ENCODE measurements at regions of chr7 and their contacts with region 1.

Region 1: GRCh38 chr7:16645593-16646471 is at the starts of genes ANKMY2 and BZW2:
- DNase-seq: peak; percentile 95
- ATAC-seq: peak; percentile 94 to 97 (median 96)
- H3K4me3 ChIP-seq: peak within 1 kb of the TSS; percentile 74 to 98 (median 90)
- H3K27ac ChIP-seq: peak within 1 kb of the TSS; percentile 73 to 98 (median 92)
- H3K4me1 ChIP-seq: peaks cover 6 to 80% (median 64%) of the 10 kb centered on the region in 9 donors
- H3K27me3 ChIP-seq: no peaks in the 10 kb centered on the region
- CTCF ChIP-seq: peak in 4 of 9 donors; percentile 13 to 46 (median 26)
- total RNA-seq, gene ANKMY2: 21.1 to 46.7 (median 35.8) TPM
- total RNA-seq, gene BZW2: 231 to 470 (median 351) TPM

Region 2: GRCh38 chr7:16661924-16662323 is 16.1 kb after region 1 on chr7:
- intact Hi-C with region 1: loop called in 1 of 10 experiments (anchors 2 kb)
- DNase-seq: peak in 1 of 2 donors; percentile 35
- ATAC-seq: peak; percentile 77 to 97 (median 92)
- H3K4me3 ChIP-seq: peak overlapping the region in 8 of 10 donors; percentile 16 to 45 (median 34)
- H3K27ac ChIP-seq: peak overlapping the region; percentile 41 to 92 (median 83)
- H3K4me1 ChIP-seq: peaks cover 3 to 57% (median 38%) of the 10 kb centered on the region in 9 donors
- H3K27me3 ChIP-seq: no peaks in the 10 kb centered on the region
- CTCF ChIP-seq: no peak

Region 3: DNA sequence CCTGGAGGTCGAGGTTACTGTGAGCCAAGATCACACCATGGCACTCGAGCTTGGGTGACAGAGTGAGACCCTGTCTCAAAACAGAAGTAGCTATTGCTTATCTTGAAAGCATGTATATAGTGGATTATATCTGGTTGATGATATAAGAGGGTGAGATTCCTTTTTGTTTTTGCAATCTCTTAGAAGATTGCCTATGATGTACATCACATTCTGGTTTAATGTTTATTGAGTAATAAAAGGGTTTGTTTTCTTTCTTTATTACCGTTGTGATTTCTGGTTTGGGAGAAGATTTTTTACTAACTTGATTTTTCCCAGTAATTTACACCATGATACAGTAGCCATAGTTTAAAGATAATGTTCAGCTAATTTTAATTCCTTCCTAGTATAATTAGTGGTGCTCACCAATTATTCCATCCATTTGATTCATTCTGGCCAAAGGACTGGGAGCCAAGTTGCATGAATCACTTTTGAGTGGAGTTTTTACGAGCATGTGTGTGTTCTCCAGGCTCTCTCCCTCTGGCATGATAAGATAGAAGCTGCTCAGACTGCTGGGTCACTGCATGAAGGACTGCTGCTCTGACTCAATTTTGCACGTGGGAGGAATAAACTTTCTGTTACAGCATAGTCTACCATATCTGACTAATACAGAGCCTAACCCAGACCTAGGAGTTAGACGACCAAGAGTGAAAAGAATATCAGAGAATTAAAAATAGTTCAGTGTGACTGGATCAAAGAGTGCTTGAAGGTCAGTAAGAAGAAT is 94.2 kb after region 1 on chr7:
- intact Hi-C with region 1: loop called in 1 of 10 experiments (anchors 5 kb)
- DNase-seq: peak in 1 of 2 donors; percentile 66
- ATAC-seq: peak; percentile 86 to 99 (median 93)
- H3K4me3 ChIP-seq: no peak overlapping the region
- H3K27ac ChIP-seq: peak overlapping the region in 9 of 10 donors; percentile 28 to 79 (median 59)
- H3K4me1 ChIP-seq: peaks cover 2 to 52% (median 34%) of the 10 kb centered on the region in 9 donors
- H3K27me3 ChIP-seq: no peaks in the 10 kb centered on the region
- CTCF ChIP-seq: no peak

Region 4: DNA sequence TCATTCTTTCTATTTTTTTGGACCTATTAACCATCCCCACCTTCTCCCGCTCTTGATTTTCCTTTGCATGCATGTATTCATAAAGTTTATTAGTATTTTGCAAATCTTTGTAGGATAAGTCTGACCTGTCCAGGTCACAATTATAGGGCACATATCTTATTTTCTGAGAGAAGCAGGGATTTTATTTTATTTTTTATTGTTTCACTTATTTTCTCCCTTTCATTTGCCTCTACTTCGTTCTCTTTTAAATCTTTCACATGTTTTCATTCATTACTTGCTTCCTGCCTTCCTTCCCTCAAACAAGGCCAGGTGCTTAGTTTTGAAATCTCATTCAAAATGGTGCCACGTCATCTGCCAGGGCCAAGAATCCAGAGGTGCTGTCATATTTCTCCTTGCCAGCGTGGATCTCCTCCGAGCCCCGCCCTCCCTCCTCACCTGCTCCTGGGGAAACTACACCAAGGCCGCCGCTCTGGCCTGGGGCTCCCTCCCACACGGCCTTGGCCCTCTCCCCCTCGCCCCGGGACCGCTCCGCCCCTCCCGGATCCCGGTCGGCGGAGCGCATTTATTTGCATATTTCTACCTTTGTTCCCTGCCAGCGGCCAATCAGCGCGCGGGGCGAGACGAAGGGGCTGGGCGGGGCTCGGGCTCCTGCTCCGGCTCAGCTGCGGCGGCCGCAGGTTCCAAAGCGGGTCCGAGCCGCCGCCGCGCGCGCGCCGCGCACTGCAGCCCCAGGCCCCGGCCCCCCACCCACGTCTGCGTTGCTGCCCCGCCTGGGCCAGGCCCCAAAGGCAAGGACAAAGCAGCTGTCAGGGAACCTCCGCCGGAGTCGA is 107.5 kb after region 1 on chr7 and contains the start of gene TSPAN13:
- intact Hi-C with region 1: loop called in 1 of 10 experiments (anchors 5 kb)
- DNase-seq: peak; percentile 79 to 80
- ATAC-seq: peak; percentile 91 to 97 (median 94)
- H3K4me3 ChIP-seq: peak within 1 kb of the TSS; percentile 60 to 97 (median 74)
- H3K27ac ChIP-seq: peak within 1 kb of the TSS; percentile 4 to 86 (median 75)
- H3K4me1 ChIP-seq: peaks cover 0 to 23% (median 6%) of the 10 kb centered on the region in 9 donors
- H3K27me3 ChIP-seq: peaks cover 0 to 16% (median 0%) of the 10 kb centered on the region in 7 donors
- CTCF ChIP-seq: no peak
- total RNA-seq, gene TSPAN13: 6.8 to 26.3 (median 10.0) TPM